PC-3 (cell line): ENCODE measurements at regions of chr16 and their contacts with region 1.

Region 1: GRCh38 chr16:47141773-47142485 is 1.8 kb downstream of the NETO2 start:
- DNase-seq: peak; percentile 87
- ATAC-seq: peak; percentile 62
- H3K4me3 ChIP-seq: peak overlapping the region; percentile 69
- H3K27ac ChIP-seq: no peak overlapping the region
- H3K4me1 ChIP-seq: peaks cover 5% of the 10 kb centered on the region
- H3K27me3 ChIP-seq: no peaks in the 10 kb centered on the region
- CTCF ChIP-seq: peak; percentile 93

Region 2: GRCh38 chr16:46947900-46948547 is 193.9 kb before region 1 on chr16:
- CTCF ChIA-PET with region 1: interaction called, 3 read pairs
- POLR2A ChIA-PET with region 1: no interaction called
- intact Hi-C with region 1: loop called (anchors 5 kb)
- DNase-seq: peak; percentile 53
- ATAC-seq: peak; percentile 69
- H3K4me3 ChIP-seq: no peak overlapping the region
- H3K27ac ChIP-seq: no peak overlapping the region
- H3K4me1 ChIP-seq: no peaks in the 10 kb centered on the region
- H3K27me3 ChIP-seq: no peaks in the 10 kb centered on the region
- CTCF ChIP-seq: peak; percentile 61

Region 3: DNA sequence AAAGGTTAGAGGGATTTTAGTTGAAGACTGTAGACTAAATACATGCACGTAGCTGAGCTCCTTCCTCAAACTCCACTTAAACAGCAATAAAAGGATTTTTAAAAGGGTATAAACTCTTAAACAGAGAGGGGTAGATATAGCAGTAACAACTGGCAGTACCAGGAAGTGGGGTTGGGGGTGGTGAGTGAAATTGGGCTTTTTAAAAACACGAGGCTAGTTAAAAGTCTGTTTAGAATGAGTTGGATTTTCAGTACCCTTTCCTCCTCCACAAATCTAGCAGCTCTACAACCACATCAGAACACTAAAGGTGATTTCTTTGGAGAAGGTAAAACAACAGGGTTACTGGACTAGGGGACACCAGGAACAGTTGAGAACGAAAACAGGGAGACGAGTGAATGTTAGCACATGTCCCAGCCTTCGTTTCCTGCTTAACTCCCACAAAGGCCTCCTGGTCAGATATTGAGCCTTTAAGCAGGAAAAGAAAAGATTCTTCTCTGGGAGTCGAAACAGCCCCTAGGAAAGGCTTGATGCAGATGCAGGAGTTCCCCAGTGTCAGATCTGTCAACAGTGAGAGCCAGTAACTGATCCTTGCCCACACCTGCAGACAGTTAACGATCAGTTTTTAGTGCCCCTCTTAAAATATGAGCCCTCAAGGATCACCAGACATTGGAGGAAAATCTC is 12.0 kb before region 1 on chr16:
- CTCF ChIA-PET with region 1: no interaction called
- POLR2A ChIA-PET with region 1: no interaction called
- intact Hi-C with region 1: no loop called
- DNase-seq: no peak
- ATAC-seq: no peak
- H3K4me3 ChIP-seq: no peak overlapping the region
- H3K27ac ChIP-seq: no peak overlapping the region
- H3K4me1 ChIP-seq: no peaks in the 10 kb centered on the region
- H3K27me3 ChIP-seq: no peaks in the 10 kb centered on the region
- CTCF ChIP-seq: no peak

Region 4: DNA sequence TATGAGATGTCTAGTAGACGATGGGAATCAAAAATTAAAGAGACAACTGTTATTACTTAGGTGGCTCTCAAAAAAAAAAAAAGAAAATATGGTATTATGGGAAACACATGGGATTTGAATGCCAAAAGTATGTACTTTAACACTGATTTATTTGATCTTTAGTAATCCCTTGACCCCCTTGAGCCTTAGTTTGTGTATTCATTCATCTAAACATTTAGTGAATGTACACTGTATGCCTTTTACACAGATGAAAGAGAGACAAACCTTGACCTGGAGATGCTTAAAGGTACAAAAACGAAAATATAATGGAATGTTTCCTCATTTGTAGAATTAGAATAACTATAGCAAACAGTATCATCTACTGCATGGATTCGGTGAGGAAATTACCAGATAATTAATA is 40.4 kb after region 1 on chr16:
- CTCF ChIA-PET with region 1: no interaction called
- POLR2A ChIA-PET with region 1: no interaction called
- intact Hi-C with region 1: no loop called
- DNase-seq: no peak
- ATAC-seq: no peak
- H3K4me3 ChIP-seq: no peak overlapping the region
- H3K27ac ChIP-seq: no peak overlapping the region
- H3K4me1 ChIP-seq: no peaks in the 10 kb centered on the region
- H3K27me3 ChIP-seq: no peaks in the 10 kb centered on the region
- CTCF ChIP-seq: no peak

Region 5: GRCh38 chr16:47460711-47461597 is 319.0 kb after region 1 on chr16 and contains the starts of genes ITFG1 and PHKB:
- CTCF ChIA-PET with region 1: interaction called, 3 read pairs
- POLR2A ChIA-PET with region 1: no interaction called
- intact Hi-C with region 1: loop called (anchors 5 kb)
- DNase-seq: peak; percentile 85
- ATAC-seq: peak; percentile 78
- H3K4me3 ChIP-seq: peak within 1 kb of the TSS; percentile 91
- H3K27ac ChIP-seq: peak within 1 kb of the TSS; percentile 94
- H3K4me1 ChIP-seq: peaks cover 21% of the 10 kb centered on the region
- H3K27me3 ChIP-seq: no peaks in the 10 kb centered on the region
- CTCF ChIP-seq: no peak
- total RNA-seq, gene ITFG1: 20.0 and 26.5 TPM in 2 replicates
- total RNA-seq, gene PHKB: 31.8 and 42.0 TPM in 2 replicates

Region 6: DNA sequence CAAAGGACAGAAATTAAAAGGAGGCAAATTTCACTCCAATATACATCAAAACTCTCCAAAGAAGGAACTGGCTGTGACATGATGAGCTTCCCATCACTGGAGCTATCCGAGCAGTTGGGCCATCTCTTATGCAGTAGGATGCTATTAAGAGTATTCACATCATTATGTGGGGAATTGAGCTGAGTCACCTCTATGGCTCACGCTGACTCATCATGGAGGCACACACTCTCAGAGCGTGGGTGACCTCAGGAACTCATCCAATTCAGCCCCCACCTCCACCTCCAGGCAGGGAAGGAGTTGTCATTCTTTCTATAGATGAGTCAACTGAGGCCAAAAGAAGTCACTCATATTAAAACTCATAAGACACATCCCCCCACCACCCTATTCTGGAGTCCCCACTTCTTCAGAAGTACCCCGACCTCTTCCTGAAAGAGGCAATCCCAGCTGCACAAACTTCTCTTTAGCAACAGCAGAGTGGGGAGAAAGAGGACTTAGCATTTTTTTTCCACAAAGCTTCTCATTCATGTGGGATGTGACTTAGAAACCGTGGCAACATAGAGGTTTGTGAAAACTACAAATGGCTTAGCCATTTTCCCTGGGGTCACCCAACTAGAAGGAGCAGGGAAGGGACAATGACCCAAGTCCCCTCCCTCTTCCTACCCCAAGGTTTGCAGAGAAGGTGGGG is 981.3 kb after region 1 on chr16:
- CTCF ChIA-PET with region 1: interaction called, 4 read pairs
- POLR2A ChIA-PET with region 1: no interaction called
- intact Hi-C with region 1: loop called (anchors 10 kb)
- DNase-seq: peak; percentile 98
- ATAC-seq: peak; percentile 76
- H3K4me3 ChIP-seq: no peak overlapping the region
- H3K27ac ChIP-seq: peak overlapping the region; percentile 99
- H3K4me1 ChIP-seq: peaks cover 52% of the 10 kb centered on the region
- H3K27me3 ChIP-seq: no peaks in the 10 kb centered on the region
- CTCF ChIP-seq: no peak

Region 7: GRCh38 chr16:48164907-48165726 is 1023.2 kb after region 1 on chr16:
- CTCF ChIA-PET with region 1: interaction called, 10 read pairs
- POLR2A ChIA-PET with region 1: no interaction called
- intact Hi-C with region 1: loop called (anchors 2 kb)
- DNase-seq: peak; percentile 77
- ATAC-seq: peak; percentile 93
- H3K4me3 ChIP-seq: peak overlapping the region; percentile 49; the same call in 1 of the 2 replicates
- H3K27ac ChIP-seq: peak overlapping the region; percentile 40
- H3K4me1 ChIP-seq: peaks cover 13% of the 10 kb centered on the region
- H3K27me3 ChIP-seq: no peaks in the 10 kb centered on the region
- CTCF ChIP-seq: peak; percentile 85